ENCODE measurements at regions of chr12 and their contacts with region 1.

Region 1: DNA sequence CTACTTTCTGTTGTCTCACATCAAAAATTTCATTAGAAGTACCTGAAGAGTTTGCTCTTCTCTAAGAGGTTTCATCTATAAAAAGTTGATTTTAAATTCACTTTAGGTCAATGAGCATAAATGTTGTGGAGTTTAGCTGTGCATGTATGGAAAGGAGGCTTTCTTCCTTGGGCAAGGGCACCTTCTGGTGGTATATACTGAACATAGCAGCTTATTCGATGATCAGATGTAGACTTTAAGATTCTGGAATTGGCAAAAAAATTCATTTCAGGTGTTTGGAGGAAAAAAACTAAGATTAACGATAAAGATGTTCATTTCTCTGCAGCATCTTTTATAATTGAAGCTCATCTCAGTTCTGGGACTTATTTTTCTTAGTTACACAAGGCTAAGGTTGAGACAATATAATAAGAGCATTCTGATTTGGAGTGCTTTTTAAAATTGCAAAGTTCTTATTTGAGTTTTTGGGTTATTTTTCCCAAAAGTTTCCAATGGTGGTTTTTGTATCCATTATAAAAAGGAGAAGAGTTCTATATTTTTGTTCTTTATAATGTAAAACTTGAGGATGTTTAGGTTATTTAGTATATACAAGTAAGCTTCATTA is 46.8 kb downstream of the TMEM117 start:
- DNase-seq: peak; percentile 46
- ATAC-seq: peak; percentile 87
- H3K4me3 ChIP-seq: no peak overlapping the region
- H3K27ac ChIP-seq: no peak overlapping the region
- H3K4me1 ChIP-seq: 0 out of 2 replicates have a peak, but pooled peaks cover 4% of the 10 kb centered on the region
- H3K27me3 ChIP-seq: no peaks in the 10 kb centered on the region
- CTCF ChIP-seq: peak; percentile 75
- EP300 ChIP-seq: no peak
- POLR2A ChIP-seq: no peak
- RAD21 ChIP-seq: peak; percentile 75

Region 2: DNA sequence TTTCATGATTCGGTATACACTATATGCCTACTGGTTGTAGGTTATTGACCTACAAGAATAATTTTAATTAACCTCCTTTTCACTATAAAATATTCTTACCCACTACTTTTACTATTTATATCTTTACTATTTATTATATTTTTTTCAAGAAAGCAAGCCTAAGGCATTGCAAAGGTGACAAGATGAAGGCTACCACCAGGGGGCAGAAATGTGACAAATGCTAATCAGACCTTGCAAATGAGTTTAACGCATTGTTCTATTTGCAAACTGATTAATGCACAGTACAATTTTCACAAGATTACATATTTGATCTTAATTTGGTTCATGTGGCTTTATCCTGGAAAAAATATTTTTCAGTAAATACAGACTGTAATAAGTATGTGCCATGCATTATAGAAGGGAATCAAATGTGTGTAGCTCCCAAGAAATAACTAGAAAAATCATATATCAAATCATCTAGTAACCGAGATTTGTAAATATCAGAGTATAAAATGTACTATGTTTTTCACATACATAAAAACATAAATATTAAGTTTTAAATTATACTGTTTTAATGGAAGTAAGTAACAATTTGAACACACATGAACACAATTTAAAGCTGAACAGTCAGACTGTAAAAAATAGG is 437.6 kb before region 1 on chr12:
- CTCF ChIA-PET with region 1: interaction called, 8 read pairs
- POLR2A ChIA-PET with region 1: no interaction called
- in situ Hi-C with region 1: no loop called
- intact Hi-C with region 1: loop called (anchors 2 kb)
- DNase-seq: peak; percentile 39
- ATAC-seq: no peak; the same call in 2 of the 3 replicates
- H3K4me3 ChIP-seq: no peak overlapping the region
- H3K27ac ChIP-seq: no peak overlapping the region
- H3K4me1 ChIP-seq: no peaks in the 10 kb centered on the region
- H3K27me3 ChIP-seq: no peaks in the 10 kb centered on the region
- CTCF ChIP-seq: peak; percentile 54
- EP300 ChIP-seq: no peak
- POLR2A ChIP-seq: no peak
- RAD21 ChIP-seq: no peak

Region 3: DNA sequence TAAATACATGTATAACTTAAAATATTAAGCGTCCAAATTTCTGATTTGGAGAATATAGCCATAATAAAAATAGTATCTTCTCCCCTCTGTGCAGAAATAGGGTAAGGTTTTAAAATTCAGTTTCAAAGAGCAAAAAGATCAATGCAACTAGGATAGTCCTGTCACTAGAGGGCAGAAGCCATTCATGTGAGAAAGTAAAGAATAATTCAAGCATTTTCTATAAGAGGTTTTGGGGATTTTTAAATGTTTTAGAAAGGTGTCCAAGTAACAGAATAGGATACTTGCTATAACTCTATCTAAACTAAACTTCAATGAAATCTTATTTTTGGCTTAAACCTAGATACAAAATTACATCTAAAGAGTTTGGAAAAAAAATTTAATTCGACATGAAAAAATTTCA is 381.0 kb before region 1 on chr12:
- CTCF ChIA-PET with region 1: interaction called, 5 read pairs
- POLR2A ChIA-PET with region 1: no interaction called
- in situ Hi-C with region 1: loop called (anchors 25 kb)
- intact Hi-C with region 1: loop called (anchors 2 kb)
- DNase-seq: peak; percentile 3
- ATAC-seq: no peak
- H3K4me3 ChIP-seq: no peak overlapping the region
- H3K27ac ChIP-seq: no peak overlapping the region
- H3K4me1 ChIP-seq: no peaks in the 10 kb centered on the region
- H3K27me3 ChIP-seq: no peaks in the 10 kb centered on the region
- CTCF ChIP-seq: peak; percentile 41
- EP300 ChIP-seq: no peak
- POLR2A ChIP-seq: no peak
- RAD21 ChIP-seq: no peak

Region 4: GRCh38 chr12:43758728-43759563 is 123.7 kb before region 1 on chr12 and contains the starts of genes IRAK4 and PUS7L:
- CTCF ChIA-PET with region 1: no interaction called
- POLR2A ChIA-PET with region 1: no interaction called
- in situ Hi-C with region 1: no loop called
- intact Hi-C with region 1: loop called (anchors 5 kb)
- DNase-seq: peak; percentile 97
- ATAC-seq: peak; percentile 93
- H3K4me3 ChIP-seq: peak within 1 kb of the TSS; percentile 70 to 93 (median 84)
- H3K27ac ChIP-seq: peak within 1 kb of the TSS; percentile 87
- H3K4me1 ChIP-seq: peaks cover 62% of the 10 kb centered on the region
- H3K27me3 ChIP-seq: no peaks in the 10 kb centered on the region; a peak in 1 of 5 replicates
- CTCF ChIP-seq: peak; percentile 78
- EP300 ChIP-seq: no peak
- POLR2A ChIP-seq: peak; percentile 80 to 83
- RAD21 ChIP-seq: no peak
- total RNA-seq, gene IRAK4: 7.1 and 8.4 TPM in 2 replicates
- total RNA-seq, gene PUS7L: 37.6 and 92.7 TPM in 2 replicates

Region 5: DNA sequence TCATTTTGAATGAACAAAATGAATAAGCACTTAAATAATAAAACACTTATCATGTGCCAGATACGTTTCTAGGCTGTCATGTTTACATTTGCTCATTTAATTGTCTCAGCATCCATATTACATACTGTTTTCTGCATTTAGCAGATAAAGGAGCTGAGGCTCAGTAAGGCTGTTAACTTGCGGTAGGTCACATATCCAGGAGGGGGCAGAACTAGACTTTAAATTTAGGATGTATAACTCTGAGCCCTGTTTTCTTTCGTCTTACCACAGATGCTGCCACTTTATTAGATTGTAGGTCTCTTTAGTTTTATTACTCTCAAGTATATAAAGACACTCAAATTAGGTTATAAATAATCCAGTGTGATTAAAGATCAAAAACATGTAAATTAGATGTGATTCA is 106.2 kb before region 1 on chr12:
- CTCF ChIA-PET with region 1: interaction called, 44 read pairs
- POLR2A ChIA-PET with region 1: interaction called, 5 read pairs
- in situ Hi-C with region 1: loop called (anchors 5 kb)
- intact Hi-C with region 1: loop called (anchors 1 kb)
- DNase-seq: peak; percentile 44
- ATAC-seq: peak; percentile 89
- H3K4me3 ChIP-seq: no peak overlapping the region
- H3K27ac ChIP-seq: no peak overlapping the region
- H3K4me1 ChIP-seq: no peaks in the 10 kb centered on the region
- H3K27me3 ChIP-seq: no peaks in the 10 kb centered on the region
- CTCF ChIP-seq: peak; percentile 61
- EP300 ChIP-seq: no peak
- POLR2A ChIP-seq: no peak
- RAD21 ChIP-seq: no peak

Region 6: GRCh38 chr12:43805860-43806736 is 76.6 kb before region 1 on chr12 and contains the start of gene TWF1:
- CTCF ChIA-PET with region 1: no interaction called
- POLR2A ChIA-PET with region 1: interaction called, 8 read pairs
- in situ Hi-C with region 1: no loop called
- intact Hi-C with region 1: loop called (anchors 1 kb)
- DNase-seq: peak; percentile 62
- ATAC-seq: peak; percentile 97
- H3K4me3 ChIP-seq: peak within 1 kb of the TSS; percentile 97 to 100 (median 98)
- H3K27ac ChIP-seq: peak within 1 kb of the TSS; percentile 96
- H3K4me1 ChIP-seq: peaks cover 26% of the 10 kb centered on the region
- H3K27me3 ChIP-seq: no peaks in the 10 kb centered on the region
- CTCF ChIP-seq: no peak; the same call in 1 of the 2 replicates
- EP300 ChIP-seq: no peak
- POLR2A ChIP-seq: peak; percentile 67 to 81
- RAD21 ChIP-seq: peak; percentile 62
- total RNA-seq, gene TWF1: 85.5 and 148 TPM in 2 replicates

Region 7: GRCh38 chr12:43835656-43836474 is 46.8 kb before region 1 on chr12 and contains the start of gene TMEM117:
- CTCF ChIA-PET with region 1: no interaction called
- POLR2A ChIA-PET with region 1: no interaction called
- in situ Hi-C with region 1: no loop called
- intact Hi-C with region 1: loop called (anchors 1 kb)
- DNase-seq: peak; percentile 25
- ATAC-seq: peak; percentile 86
- H3K4me3 ChIP-seq: peak within 1 kb of the TSS; percentile 75 to 86 (median 76)
- H3K27ac ChIP-seq: peak within 1 kb of the TSS; percentile 83
- H3K4me1 ChIP-seq: peaks cover 44% of the 10 kb centered on the region
- H3K27me3 ChIP-seq: no peaks in the 10 kb centered on the region
- CTCF ChIP-seq: no peak
- EP300 ChIP-seq: no peak
- POLR2A ChIP-seq: peak; percentile 42 to 54
- RAD21 ChIP-seq: peak; percentile 32
- total RNA-seq, gene TMEM117: 6.5 and 8.5 TPM in 2 replicates

Measured in HepG2 (cell line).